ENCODE measurements at regions of chr2 and their contacts with region 1.

Region 1: DNA sequence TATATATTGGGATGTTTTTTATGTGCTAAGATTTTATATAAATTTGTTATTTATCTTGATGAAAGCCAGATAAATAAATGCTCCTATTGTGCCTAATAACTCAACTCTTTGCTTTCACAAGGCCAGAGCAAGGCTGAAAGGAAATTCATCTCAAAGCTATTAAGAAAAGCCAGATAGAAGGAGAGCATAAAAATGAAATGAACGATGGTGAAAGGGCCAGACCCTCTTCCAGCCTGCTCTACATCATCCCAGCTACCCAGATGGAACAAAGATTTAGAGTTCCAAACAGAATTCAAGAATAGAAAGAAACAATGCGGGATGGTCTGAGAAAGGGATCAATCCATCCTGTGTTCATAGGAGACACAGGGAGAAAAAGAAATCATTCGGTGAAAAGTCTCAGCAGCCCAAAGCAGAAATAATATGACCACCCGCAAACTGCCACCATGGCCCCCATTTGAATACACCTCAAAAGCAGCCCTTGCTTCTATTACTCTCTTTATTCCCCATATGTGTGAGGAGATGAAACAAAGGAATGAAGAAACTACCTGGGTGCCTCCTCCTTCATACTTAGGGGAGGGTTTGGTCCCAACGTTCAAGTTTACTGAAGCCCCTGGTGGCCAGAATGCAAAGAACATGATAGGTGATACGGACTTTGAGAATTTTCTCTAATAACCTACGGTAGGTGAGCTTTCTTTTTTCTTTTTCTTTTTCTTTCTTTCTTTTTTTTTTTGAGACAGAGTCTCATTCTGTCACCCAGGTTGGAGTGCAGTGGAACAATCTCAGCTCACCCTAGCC is 110.1 kb upstream of the FBXO11 start:
- DNase-seq: peak; percentile 24
- ATAC-seq: peak; percentile 94
- H3K4me3 Mint-ChIP-seq: no peak overlapping the region
- H3K27ac Mint-ChIP-seq: no peak overlapping the region
- H3K4me1 Mint-ChIP-seq: peaks cover 16% of the 10 kb centered on the region; the same call in 1 of the 2 replicates
- H3K27me3 Mint-ChIP-seq: no peaks in the 10 kb centered on the region
- CTCF ChIP-seq: peak; percentile 39; the same call in 1 of the 2 replicates

Region 2: DNA sequence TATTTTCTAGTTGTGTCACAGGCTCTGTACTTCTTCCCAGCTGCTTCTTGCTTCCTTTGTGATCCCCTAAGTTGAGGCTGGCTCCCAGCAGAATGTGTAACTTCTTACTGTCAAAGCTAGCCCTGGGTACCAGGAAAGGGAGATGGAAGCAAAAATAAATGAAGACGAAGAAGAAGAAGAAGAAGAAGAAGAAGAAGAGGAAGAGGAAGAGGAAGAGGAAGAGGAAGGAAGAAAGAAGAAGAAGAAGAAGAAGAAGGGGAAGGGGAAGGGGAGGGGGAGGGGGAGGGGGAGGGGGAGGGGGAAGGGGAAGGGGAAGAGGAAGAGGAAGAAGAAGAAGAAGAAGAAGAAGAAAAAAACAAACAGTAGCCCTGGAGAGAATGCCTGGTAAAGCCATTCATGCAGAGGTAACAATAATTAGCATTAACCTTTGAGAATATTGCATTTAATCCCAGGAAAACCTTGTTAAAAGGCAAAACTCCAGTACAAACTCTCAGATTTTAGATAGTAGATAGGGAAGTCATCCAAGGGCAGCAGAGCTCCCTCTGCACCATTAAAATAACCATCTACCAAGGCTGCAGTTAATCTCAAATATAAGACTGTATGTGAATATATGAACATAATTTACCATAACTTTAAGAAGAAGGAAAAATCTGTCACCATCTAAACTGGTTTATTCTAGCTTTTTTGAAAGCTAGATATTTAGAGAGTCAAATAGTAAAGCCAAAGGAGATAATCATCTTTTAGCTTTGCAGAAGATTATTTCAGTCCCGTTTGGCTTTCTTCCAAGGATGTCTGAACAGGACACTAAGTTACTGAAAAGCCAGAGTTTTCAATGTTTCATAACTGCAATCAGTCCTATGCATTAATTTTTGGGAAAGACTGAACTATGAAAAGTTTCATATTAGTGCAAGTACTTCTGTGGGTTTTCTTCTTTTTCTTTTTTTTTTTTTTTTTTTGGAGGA is 65.8 kb before region 1 on chr2:
- CTCF ChIA-PET with region 1: no interaction called
- POLR2A ChIA-PET with region 1: no interaction called
- DNase-seq: no peak
- ATAC-seq: no peak
- H3K4me3 Mint-ChIP-seq: no peak overlapping the region
- H3K27ac Mint-ChIP-seq: no peak overlapping the region
- H3K4me1 Mint-ChIP-seq: no peaks in the 10 kb centered on the region
- H3K27me3 Mint-ChIP-seq: no peaks in the 10 kb centered on the region; the same call in 1 of the 2 replicates
- CTCF ChIP-seq: no peak

Region 3: GRCh38 chr2:48026865-48027264 is 10.4 kb after region 1 on chr2:
- CTCF ChIA-PET with region 1: interaction called, 10 read pairs
- POLR2A ChIA-PET with region 1: interaction called, 5 read pairs
- DNase-seq: no peak
- ATAC-seq: peak; percentile 63
- H3K4me3 Mint-ChIP-seq: no peak overlapping the region
- H3K27ac Mint-ChIP-seq: no peak overlapping the region
- H3K4me1 Mint-ChIP-seq: peaks cover 25% of the 10 kb centered on the region
- H3K27me3 Mint-ChIP-seq: no peaks in the 10 kb centered on the region; the same call in 1 of the 2 replicates
- CTCF ChIP-seq: no peak